ENCODE measurements at regions of chr2 and their contacts with region 1.

Region 1: DNA sequence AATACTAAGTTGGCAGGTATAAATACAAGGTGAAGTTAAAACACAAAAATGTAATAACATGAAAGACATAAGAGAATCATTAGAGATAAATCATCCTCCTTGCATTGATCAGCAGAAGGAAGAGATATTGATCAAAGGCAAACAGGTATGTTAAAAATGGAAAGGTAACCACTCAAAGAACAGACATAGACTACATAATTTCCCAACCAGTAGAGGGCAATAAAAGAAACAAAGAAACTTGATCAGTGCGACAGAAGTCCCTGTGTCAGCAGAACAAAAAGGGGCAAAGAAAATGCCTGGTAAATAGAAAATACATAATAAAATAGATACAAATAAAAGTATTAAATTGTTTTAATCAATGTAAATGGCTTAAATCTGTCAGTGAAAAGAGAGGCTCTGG is 53.6 kb downstream of the FAM228A start:
- DNase-seq: no peak
- ATAC-seq: peak; percentile 81; the same call in 1 of the 2 replicates
- H3K4me3 ChIP-seq: no peak overlapping the region
- H3K27ac ChIP-seq: no peak overlapping the region
- H3K4me1 ChIP-seq: no peaks in the 10 kb centered on the region; the same call in 1 of the 2 replicates
- H3K27me3 ChIP-seq: no peaks in the 10 kb centered on the region
- CTCF ChIP-seq: peak; percentile 65; the same call in 1 of the 2 replicates

Region 2: DNA sequence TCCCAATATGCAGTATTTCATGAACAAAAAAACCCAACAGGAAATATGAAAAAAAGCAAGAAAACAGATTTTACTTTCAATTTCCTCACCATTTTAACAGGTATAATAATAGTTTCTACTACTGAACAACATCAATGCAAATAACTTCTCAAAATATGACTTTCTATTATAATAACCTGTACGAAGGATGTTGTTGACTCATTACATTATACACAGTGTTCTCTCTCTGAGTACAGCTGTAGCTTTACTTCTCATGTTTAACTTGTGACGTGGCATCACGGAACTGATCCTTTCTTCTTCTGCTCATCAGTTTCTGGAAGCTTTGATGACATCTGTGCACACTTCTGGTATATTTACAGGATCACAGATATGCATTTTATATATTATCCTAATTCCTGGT is 13.6 kb before region 1 on chr2:
- CTCF ChIA-PET with region 1: no interaction called
- POLR2A ChIA-PET with region 1: no interaction called
- in situ Hi-C with region 1: no loop called
- intact Hi-C with region 1: no loop called
- DNase-seq: no peak
- ATAC-seq: no peak
- H3K4me3 ChIP-seq: no peak overlapping the region
- H3K27ac ChIP-seq: no peak overlapping the region
- H3K4me1 ChIP-seq: no peaks in the 10 kb centered on the region
- H3K27me3 ChIP-seq: no peaks in the 10 kb centered on the region
- CTCF ChIP-seq: no peak

Region 3: DNA sequence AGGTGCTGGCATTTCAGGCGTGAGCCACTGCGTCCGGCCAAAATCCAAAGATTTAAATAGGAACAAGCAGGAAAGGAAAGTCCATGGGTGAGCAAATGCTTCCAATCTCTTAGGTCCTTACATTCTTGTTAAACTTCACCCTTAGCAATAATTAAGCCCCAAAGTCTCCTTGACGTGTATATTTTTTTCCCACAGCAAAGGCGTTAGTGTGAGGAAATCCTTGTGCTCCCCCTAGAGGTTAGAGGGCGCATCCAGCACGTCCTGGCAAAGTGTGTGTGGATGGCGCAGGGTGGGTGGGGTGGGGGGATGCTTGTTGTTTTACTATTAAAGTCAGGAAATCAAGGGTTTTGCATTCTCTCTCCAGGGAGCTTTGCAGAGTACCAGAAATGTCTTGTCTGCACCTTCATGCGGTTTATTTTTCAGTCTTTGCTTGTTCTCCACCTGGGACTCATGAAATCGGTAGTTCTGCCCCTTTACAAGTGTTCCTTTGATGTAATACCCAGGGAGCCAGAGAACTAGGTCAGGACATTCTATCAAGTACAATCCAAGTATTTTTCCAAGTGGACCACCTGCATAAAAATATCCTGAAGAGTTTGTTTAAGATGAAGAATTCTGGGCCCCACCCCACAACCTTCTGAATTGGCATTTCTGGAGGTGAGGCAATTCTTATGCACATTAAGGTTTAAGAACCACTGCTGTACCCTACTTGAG is 154.0 kb after region 1 on chr2:
- CTCF ChIA-PET with region 1: no interaction called
- POLR2A ChIA-PET with region 1: no interaction called
- in situ Hi-C with region 1: no loop called
- intact Hi-C with region 1: loop called (anchors 5 kb)
- DNase-seq: peak; percentile 61
- ATAC-seq: peak; percentile 98
- H3K4me3 ChIP-seq: no peak overlapping the region
- H3K27ac ChIP-seq: no peak overlapping the region
- H3K4me1 ChIP-seq: no peaks in the 10 kb centered on the region
- H3K27me3 ChIP-seq: no peaks in the 10 kb centered on the region
- CTCF ChIP-seq: peak; percentile 89

Measured in Panc1 (cell line).